ENCODE measurements at regions of chrX and their contacts with region 1.

Region 1: GRCh38 chrX:15854712-15855567 is at the start of gene AP1S2:
- DNase-seq: peak; percentile 98
- ATAC-seq: peak; percentile 97
- H3K4me3 ChIP-seq: peak within 1 kb of the TSS; percentile 62 to 98
- H3K27ac ChIP-seq: peak within 1 kb of the TSS; percentile 7 to 96
- H3K4me1 ChIP-seq: no peaks in the 10 kb centered on the region
- H3K27me3 ChIP-seq: no peaks in the 10 kb centered on the region
- total RNA-seq, gene AP1S2: 49.1 to 55.9 TPM

Region 2: GRCh38 chrX:15619061-15619777 is 235.7 kb before region 1 on chrX:
- intact Hi-C with region 1: no loop called
- DNase-seq: no peak
- ATAC-seq: no peak
- H3K4me3 ChIP-seq: no peak overlapping the region
- H3K27ac ChIP-seq: no peak overlapping the region
- H3K4me1 ChIP-seq: no peaks in the 10 kb centered on the region
- H3K27me3 ChIP-seq: no peaks in the 10 kb centered on the region

Region 3: DNA sequence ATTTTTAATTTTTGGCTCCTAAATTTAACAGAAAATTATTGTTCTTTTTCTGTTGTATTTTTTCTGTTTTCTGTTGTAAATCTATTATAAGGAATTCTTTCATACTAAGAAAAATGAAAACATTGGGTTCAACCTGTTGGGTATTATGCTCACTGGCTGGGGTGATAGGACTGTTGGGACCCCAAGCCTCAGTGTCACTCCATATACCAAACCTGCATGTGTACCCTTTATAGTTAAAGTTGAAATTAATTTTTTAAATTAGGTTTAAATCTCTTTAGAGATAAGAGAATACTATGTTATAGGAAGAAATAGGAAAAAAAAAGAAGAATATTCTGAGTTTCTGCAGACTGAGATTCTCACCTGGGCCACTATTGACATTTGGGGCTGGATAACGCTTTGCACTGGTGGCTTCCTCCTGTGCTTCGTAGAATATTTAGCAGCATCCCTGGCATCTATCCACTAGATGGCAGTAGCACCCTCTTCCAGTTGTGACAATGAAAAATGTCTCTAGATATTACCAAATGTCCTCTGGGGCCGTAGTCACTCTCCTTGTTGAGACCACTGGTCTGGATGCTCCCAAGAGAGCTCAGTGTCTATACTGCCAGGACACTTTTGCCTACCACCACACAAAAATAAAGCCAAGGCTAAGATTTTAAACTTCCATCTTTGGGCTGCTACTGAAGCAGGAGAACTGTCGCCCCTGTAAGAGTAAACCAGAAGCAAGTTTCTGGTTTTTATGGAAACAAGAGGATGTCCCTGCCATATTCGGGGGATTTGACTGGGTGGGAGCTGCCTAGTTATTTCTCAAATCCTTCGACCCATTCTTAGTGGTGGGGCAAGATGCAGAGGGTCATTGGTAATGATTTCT is 167.9 kb before region 1 on chrX:
- intact Hi-C with region 1: loop called in 1 of 2 experiments (anchors 10 kb)
- DNase-seq: no peak
- ATAC-seq: peak; percentile 89
- H3K4me3 ChIP-seq: no peak overlapping the region
- H3K27ac ChIP-seq: no peak overlapping the region
- H3K4me1 ChIP-seq: no peaks in the 10 kb centered on the region
- H3K27me3 ChIP-seq: no peaks in the 10 kb centered on the region

Region 4: GRCh38 chrX:16993791-16994318 is 1138.9 kb after region 1 on chrX:
- intact Hi-C with region 1: no loop called
- DNase-seq: no peak
- ATAC-seq: no peak
- H3K4me3 ChIP-seq: no peak overlapping the region
- H3K27ac ChIP-seq: no peak overlapping the region
- H3K4me1 ChIP-seq: no peaks in the 10 kb centered on the region
- H3K27me3 ChIP-seq: no peaks in the 10 kb centered on the region

Measured in aorta (tissue), 5 donors.